Stomach (tissue), 19 donors: ENCODE measurements at regions of chr6 and their contacts with region 1.

Region 1: GRCh38 chr6:114304304-114304887 is 38.4 kb downstream of the HS3ST5 start:
- DNase-seq: peak in 1 of 2 donors; percentile 35
- H3K4me3 ChIP-seq: no peak overlapping the region
- H3K27ac ChIP-seq: no peak overlapping the region
- H3K4me1 ChIP-seq: no peaks in the 10 kb centered on the region
- H3K27me3 ChIP-seq: no peaks in the 10 kb centered on the region
- CTCF ChIP-seq: peak in 2 of 7 experiments; percentile 31 to 33
- EP300 ChIP-seq: no peak
- POLR2A ChIP-seq: no peak

Region 2: DNA sequence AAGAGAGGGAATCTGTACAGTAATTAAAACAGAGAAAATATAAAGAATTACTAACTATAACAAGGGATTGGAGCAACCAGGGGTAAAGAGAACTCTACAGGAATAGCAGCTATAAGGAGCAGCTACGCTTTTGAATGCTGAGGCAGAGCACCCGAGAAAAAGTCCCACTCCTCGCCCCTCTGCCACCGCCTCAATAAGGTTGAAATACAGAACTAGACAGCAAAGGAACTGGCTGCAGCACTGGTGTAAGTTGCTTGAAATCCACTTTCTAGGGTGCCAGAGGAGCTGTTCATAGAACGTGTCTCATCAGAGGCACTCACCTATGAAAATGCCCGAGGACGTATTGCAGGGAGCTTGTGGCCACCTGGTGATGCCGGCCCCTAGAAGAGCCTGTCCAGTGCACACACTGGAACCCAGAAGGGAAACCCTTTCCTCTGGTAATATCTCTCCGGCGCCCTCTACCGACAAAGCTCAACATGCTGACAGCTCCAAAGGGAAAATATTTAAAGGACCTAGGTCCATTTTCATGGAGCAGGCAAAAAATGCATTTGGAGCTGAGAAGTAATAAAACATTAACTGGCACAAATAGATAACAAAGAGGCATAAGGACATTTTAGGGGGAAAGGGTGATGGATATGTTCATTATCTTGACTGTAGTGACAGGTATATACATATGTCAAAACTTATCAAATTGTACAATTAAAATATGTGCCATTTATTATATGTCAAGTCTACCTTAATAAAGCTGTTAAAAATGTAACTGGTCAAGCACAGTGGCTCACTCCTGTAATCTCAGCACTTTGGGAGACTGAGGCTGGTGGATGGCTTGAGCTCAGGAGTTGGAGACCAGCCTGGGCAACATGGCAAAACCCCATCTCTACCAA is 196.0 kb before region 1 on chr6:
- intact Hi-C with region 1: loop called (anchors 10 kb)
- DNase-seq: peak; percentile 69 to 74
- H3K4me3 ChIP-seq: no peak overlapping the region
- H3K27ac ChIP-seq: no peak overlapping the region
- H3K4me1 ChIP-seq: no peaks in the 10 kb centered on the region
- H3K27me3 ChIP-seq: no peaks in the 10 kb centered on the region
- CTCF ChIP-seq: peak in 4 of 7 experiments; percentile 27 to 39 (median 32)
- EP300 ChIP-seq: no peak
- POLR2A ChIP-seq: no peak

Region 3: DNA sequence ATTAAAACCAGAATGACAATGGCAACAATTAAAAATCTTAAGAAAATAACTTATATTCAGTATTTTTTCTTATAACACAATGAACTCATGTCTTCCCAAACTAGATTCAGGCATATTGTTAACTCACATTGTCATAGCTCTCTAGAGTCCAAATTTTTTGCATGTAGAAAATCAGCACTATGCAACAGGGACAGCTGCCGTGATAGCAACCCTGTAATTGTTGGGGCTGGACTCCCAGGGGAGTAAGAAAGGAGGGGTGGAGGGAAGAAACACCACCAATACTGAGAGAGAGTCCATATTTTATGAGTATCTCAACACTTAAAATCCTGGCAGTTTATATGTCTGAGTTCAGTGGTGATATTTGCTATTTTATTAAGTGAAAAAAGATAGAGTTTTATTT is 128.0 kb after region 1 on chr6:
- intact Hi-C with region 1: no loop called
- DNase-seq: peak in 1 of 2 donors; percentile 14
- H3K4me3 ChIP-seq: no peak overlapping the region
- H3K27ac ChIP-seq: no peak overlapping the region
- H3K4me1 ChIP-seq: no peaks in the 10 kb centered on the region
- H3K27me3 ChIP-seq: no peaks in the 10 kb centered on the region
- CTCF ChIP-seq: no peak
- EP300 ChIP-seq: no peak
- POLR2A ChIP-seq: no peak

Region 4: GRCh38 chr6:114514153-114514552 is 209.8 kb after region 1 on chr6:
- intact Hi-C with region 1: no loop called
- DNase-seq: no peak
- H3K4me3 ChIP-seq: no peak overlapping the region
- H3K27ac ChIP-seq: no peak overlapping the region
- H3K4me1 ChIP-seq: no peaks in the 10 kb centered on the region
- H3K27me3 ChIP-seq: no peaks in the 10 kb centered on the region
- CTCF ChIP-seq: no peak
- EP300 ChIP-seq: no peak
- POLR2A ChIP-seq: no peak

Region 5: DNA sequence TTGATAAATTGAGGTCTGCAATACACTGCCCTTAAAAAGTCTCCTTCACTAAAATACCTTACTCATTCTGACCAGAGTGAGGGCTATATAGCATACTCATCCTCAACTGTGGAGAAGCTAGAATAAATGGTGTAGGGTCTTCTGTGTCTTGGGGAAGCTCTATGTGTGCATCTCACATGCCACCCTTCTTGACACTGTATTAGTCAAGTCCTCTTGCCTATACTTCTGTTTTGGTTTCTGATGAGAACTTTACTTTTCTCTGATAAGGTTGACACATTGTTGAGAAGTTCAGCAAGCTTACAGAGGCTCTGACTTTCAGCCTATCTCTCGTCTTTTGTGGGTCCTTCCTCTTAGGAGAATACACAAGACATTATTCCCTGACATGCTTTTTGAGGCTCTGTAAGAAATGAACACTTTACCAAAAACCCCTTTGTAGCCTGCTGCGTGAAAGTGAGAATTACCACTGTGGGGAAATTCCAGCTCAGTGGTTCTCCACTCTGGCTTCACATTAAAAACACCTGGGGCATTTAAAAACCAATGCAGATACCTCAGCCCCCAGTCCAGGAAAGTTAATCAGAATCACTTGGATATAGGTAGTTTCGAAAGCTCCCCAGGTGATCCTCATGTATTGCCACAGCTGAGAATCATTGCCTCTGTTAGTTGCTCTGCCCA is 410.6 kb after region 1 on chr6:
- intact Hi-C with region 1: no loop called
- DNase-seq: no peak
- H3K4me3 ChIP-seq: no peak overlapping the region
- H3K27ac ChIP-seq: no peak overlapping the region
- H3K4me1 ChIP-seq: no peaks in the 10 kb centered on the region
- H3K27me3 ChIP-seq: no peaks in the 10 kb centered on the region
- CTCF ChIP-seq: no peak
- EP300 ChIP-seq: no peak
- POLR2A ChIP-seq: no peak